Activated CD4-positive, alpha-beta T cell treated with anti-CD3 and anti-CD28 coated beads for 36 hours (primary cell): ENCODE measurements at regions of chr7 and their contacts with region 1.

Region 1: GRCh38 chr7:22559829-22560489 is 60.0 kb upstream of the STEAP1B start:
- DNase-seq: peak; percentile 82
- ATAC-seq: peak; percentile 65
- H3K4me3 Mint-ChIP-seq: no peak overlapping the region
- H3K27ac Mint-ChIP-seq: no peak overlapping the region
- H3K4me1 Mint-ChIP-seq: peaks cover 37% of the 10 kb centered on the region
- H3K27me3 Mint-ChIP-seq: peaks cover 16% of the 10 kb centered on the region

Region 2: DNA sequence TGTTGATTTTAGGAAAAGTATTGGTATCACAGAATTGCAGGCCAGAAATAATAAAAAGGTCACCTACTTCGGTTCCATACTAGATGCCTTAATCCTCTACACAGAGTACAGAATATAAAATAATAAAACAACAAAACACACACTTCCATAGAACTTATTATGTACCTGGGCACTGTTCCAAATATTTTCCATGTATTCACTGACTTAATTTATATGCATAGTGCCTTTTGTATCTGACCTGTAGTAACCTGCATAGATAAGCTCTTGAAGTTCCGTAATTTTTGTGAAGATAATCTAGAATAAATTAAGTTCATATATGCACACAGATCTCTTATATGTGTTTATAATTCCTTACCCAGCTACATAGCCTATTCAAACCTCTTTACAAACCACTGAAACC is 281.3 kb before region 1 on chr7:
- CTCF ChIA-PET with region 1: no interaction called
- POLR2A ChIA-PET with region 1: no interaction called
- intact Hi-C with region 1: no loop called
- DNase-seq: no peak
- ATAC-seq: no peak
- H3K4me3 Mint-ChIP-seq: no peak overlapping the region
- H3K27ac Mint-ChIP-seq: no peak overlapping the region
- H3K4me1 Mint-ChIP-seq: no peaks in the 10 kb centered on the region
- H3K27me3 Mint-ChIP-seq: no peaks in the 10 kb centered on the region

Region 3: GRCh38 chr7:22377703-22378102 is 182.3 kb before region 1 on chr7:
- CTCF ChIA-PET with region 1: no interaction called
- POLR2A ChIA-PET with region 1: no interaction called
- intact Hi-C with region 1: no loop called
- DNase-seq: no peak
- ATAC-seq: no peak
- H3K4me3 Mint-ChIP-seq: no peak overlapping the region
- H3K27ac Mint-ChIP-seq: no peak overlapping the region
- H3K4me1 Mint-ChIP-seq: no peaks in the 10 kb centered on the region
- H3K27me3 Mint-ChIP-seq: no peaks in the 10 kb centered on the region

Region 4: GRCh38 chr7:22726345-22727185 is 166.6 kb after region 1 on chr7:
- CTCF ChIA-PET with region 1: interaction called, 311 read pairs
- POLR2A ChIA-PET with region 1: interaction called, 3 read pairs
- intact Hi-C with region 1: loop called (anchors 1 kb)
- DNase-seq: peak; percentile 79
- ATAC-seq: peak; percentile 92
- H3K4me3 Mint-ChIP-seq: peak overlapping the region; percentile 51
- H3K27ac Mint-ChIP-seq: peak overlapping the region; percentile 61
- H3K4me1 Mint-ChIP-seq: peaks cover 28% of the 10 kb centered on the region
- H3K27me3 Mint-ChIP-seq: peaks cover 31% of the 10 kb centered on the region

Region 5: GRCh38 chr7:22732556-22733126 is 172.7 kb after region 1 on chr7:
- CTCF ChIA-PET with region 1: interaction called, 311 read pairs
- POLR2A ChIA-PET with region 1: interaction called, 3 read pairs
- intact Hi-C with region 1: no loop called
- DNase-seq: no peak
- ATAC-seq: no peak
- H3K4me3 Mint-ChIP-seq: no peak overlapping the region
- H3K27ac Mint-ChIP-seq: no peak overlapping the region
- H3K4me1 Mint-ChIP-seq: peaks cover 9% of the 10 kb centered on the region
- H3K27me3 Mint-ChIP-seq: peaks cover 31% of the 10 kb centered on the region

Region 6: GRCh38 chr7:22782616-22783232 is 222.8 kb after region 1 on chr7:
- CTCF ChIA-PET with region 1: interaction called, 101 read pairs
- POLR2A ChIA-PET with region 1: interaction called, 3 read pairs
- intact Hi-C with region 1: loop called (anchors 1 kb)
- DNase-seq: peak; percentile 89
- ATAC-seq: peak; percentile 88
- H3K4me3 Mint-ChIP-seq: no peak overlapping the region
- H3K27ac Mint-ChIP-seq: no peak overlapping the region
- H3K4me1 Mint-ChIP-seq: no peaks in the 10 kb centered on the region
- H3K27me3 Mint-ChIP-seq: peaks cover 3% of the 10 kb centered on the region

Region 7: DNA sequence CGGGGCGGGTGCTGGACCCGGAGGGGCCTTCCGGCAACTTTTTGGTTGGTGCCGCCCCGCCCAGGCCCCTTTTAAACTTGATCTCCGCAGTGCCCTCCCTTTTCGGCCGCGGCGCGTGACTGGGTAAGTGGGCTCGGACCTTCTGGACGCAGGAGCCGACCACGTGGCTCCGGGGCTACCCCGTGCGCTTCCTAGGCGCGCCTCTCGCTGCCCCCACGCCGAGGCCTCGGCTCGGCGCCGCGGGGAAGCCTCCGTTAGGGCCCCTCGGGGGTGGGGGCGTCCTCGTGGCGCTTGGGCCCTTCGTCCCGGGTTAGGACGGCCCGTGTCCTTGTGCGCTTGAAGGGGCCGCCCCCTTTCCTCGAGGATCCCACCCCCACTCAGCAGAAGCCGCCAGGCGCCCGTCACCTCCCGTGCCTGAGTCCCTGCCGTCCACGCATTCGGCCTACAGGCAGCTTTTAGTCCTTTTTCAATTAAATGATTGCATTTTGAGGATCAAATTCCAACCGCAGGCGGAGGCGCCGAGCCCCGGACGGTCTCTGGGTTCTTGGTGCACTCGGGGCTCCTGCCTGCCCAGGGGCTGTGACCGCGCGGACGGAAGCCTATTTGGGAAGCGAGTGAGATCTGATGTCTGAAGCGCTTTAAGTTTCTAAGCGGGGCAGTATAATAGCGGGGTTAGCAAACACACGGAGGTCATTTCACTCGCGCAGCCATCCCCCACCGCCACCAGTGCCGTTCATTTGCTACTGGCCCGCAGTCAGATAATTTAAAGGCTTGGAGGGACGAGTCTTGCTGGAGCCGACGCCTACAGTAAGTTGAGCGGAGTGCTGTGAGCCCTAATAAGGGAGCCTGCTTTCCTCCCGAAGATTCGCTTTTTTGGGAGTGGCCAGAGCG is 294.4 kb after region 1 on chr7:
- CTCF ChIA-PET with region 1: interaction called, 4 read pairs
- POLR2A ChIA-PET with region 1: no interaction called
- intact Hi-C with region 1: loop called in 1 of 2 experiments (anchors 1 kb)
- DNase-seq: peak; percentile 89
- ATAC-seq: peak; percentile 74
- H3K4me3 Mint-ChIP-seq: peak overlapping the region; percentile 92
- H3K27ac Mint-ChIP-seq: peak overlapping the region; percentile 92
- H3K4me1 Mint-ChIP-seq: peaks cover 34% of the 10 kb centered on the region
- H3K27me3 Mint-ChIP-seq: peaks cover 2% of the 10 kb centered on the region

Region 8: GRCh38 chr7:22860784-22861482 is 301.0 kb after region 1 on chr7:
- CTCF ChIA-PET with region 1: interaction called, 4 read pairs
- POLR2A ChIA-PET with region 1: no interaction called
- intact Hi-C with region 1: loop called in 1 of 2 experiments (anchors 10 kb)
- DNase-seq: peak; percentile 45
- ATAC-seq: peak; percentile 44
- H3K4me3 Mint-ChIP-seq: no peak overlapping the region
- H3K27ac Mint-ChIP-seq: peak overlapping the region; percentile 51
- H3K4me1 Mint-ChIP-seq: peaks cover 51% of the 10 kb centered on the region
- H3K27me3 Mint-ChIP-seq: no peaks in the 10 kb centered on the region